MCF 10A (cell line): ENCODE measurements at regions of chrX and their contacts with region 1.

Region 1: DNA sequence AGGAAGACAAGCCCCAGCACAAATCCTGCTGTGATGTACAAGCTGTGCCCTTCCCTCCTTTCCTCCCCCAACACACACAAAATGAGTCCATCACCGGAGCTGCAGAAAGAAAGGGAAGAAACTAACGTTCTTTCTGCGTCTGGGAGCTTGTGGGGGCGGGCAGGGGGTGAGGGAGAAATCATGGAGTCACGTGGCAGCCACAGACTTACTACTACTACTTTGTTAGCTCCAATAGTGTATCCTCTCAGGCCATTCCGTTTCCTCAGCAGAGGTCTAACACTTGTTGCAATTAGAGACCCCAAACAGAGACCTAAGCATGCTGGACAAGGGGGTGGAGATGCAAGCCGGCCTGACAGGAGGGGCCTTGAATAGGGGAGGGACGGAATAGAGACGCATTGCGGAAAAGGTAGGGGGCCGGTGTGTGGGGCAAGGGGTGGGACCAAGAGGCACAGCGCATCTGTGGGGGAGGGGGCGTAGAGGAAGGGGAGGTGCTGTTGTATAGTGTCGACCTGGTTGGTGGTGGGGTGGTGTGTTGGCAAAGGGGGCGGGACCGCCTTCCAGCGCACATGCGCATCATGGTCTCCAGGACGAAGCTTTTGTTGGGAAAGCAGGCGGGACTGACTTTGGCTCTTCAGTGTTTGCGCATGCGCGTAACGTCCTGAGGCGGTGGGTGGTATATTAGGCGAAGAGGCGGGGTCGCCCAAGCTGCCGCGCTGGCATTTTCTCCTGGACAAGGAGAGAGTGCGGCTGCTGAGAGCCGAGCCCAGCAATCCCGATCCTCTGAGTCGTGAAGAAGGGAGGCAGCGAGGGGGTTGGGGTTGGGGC is at the start of gene MAGED1:
- DNase-seq: peak; percentile 87
- H3K4me3 Mint-ChIP-seq: peak within 1 kb of the TSS; percentile 82
- H3K27ac Mint-ChIP-seq: peak within 1 kb of the TSS; percentile 89
- H3K4me1 Mint-ChIP-seq: peaks cover 6% of the 10 kb centered on the region
- H3K27me3 Mint-ChIP-seq: peaks cover 15% of the 10 kb centered on the region
- CTCF ChIP-seq: no peak
- total RNA-seq, gene MAGED1: 46.7 and 48.6 TPM in 2 replicates

Region 2: DNA sequence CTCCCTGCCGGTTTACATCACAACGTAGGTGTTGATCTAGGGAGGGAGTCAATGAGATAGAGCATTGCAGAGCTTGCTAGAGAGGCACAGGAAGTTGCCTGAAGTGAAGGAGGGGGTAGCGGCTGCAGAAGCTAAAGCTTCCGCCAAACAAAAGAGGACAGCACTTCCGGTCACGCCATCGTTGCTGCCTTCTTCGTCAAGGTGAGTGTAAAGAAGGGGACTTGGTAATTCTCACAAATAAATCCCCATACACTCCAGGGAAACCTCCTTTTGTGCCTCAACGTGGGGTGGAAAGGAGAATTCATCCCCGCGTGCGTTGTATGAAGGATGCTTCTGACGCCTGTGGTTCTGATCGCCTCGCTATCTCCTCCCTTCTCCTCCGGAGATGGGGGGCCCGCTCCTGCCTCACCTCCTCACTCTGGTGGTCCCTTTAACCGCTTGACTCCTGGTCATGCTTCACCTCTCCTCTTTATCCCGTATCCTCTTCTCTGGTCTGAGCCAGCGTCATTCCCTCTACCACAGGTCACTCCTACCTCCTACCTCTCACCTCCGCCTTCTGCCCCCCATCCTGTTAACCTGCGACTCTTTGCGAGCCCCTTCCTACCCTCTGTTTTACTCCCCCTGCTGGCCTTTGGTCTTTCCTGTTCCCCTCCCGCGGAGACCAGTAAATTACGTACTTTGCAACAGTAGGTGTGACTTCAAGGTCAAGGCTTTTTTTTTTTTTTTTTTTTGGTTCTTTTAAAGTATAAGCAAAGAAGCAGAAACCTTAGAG is 90.0 kb before region 1 on chrX:
- CTCF ChIA-PET with region 1: no interaction called
- POLR2A ChIA-PET with region 1: interaction called, 4 read pairs
- intact Hi-C with region 1: loop called (anchors 1 kb)
- DNase-seq: peak; percentile 53
- H3K4me3 Mint-ChIP-seq: peak overlapping the region; percentile 83
- H3K27ac Mint-ChIP-seq: peak overlapping the region; percentile 91
- H3K4me1 Mint-ChIP-seq: peaks cover 6% of the 10 kb centered on the region
- H3K27me3 Mint-ChIP-seq: peaks cover 37% of the 10 kb centered on the region
- CTCF ChIP-seq: no peak

Region 3: DNA sequence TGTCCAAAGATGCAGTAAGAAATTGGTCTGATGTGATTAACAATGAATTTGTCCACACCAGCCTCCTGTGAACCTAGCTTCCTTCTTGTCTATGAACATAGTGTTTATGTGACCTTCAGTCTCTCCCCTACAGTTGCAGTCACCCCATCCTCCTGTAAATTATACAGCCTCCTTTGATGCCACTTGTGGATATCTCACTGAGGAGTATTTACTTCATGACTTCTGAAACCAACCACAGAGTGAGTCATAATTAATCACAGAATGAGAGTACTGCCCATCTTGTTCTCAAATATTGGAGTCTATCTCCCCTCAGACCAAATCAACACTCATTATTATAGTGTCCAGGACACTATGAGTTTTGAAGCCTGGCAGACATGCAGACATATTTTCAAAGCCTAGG is 448.4 kb after region 1 on chrX:
- CTCF ChIA-PET with region 1: no interaction called
- POLR2A ChIA-PET with region 1: no interaction called
- intact Hi-C with region 1: no loop called
- DNase-seq: no peak
- H3K4me3 Mint-ChIP-seq: no peak overlapping the region
- H3K27ac Mint-ChIP-seq: no peak overlapping the region
- H3K4me1 Mint-ChIP-seq: no peaks in the 10 kb centered on the region
- H3K27me3 Mint-ChIP-seq: peaks cover 67% of the 10 kb centered on the region
- CTCF ChIP-seq: no peak